ENCODE measurements at regions of chr14 and their contacts with region 1.

Region 1: DNA sequence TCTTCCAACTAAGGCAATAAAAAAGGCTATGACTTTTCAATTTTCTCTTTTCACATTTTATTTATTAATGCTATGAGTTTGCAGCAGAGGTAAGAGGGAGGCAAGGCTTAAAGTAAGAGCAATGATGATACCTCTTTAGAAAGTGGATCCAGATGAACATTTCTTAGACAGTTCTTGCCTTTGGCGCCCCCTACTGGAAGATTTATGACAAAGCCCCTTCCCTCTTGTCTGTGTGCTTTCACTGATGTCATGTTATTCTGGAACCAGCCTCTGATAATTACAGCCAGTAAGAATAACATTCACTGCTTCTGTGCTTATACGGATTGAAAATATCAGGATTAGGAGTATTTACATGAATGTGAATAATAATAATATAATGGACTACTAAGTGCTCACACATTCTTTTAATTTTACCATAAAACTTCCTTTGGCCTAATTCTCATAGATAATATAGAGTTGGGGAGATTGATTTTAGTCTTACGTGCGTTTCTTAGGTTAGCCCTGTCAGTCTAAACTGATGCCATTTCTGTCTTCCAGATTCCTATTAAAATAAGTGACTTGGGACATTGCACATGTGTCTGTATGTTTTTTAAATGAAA is 1929.9 kb upstream of the SEL1L start:
- DNase-seq: peak; percentile 46
- H3K4me3 ChIP-seq: no peak overlapping the region
- H3K27ac ChIP-seq: no peak overlapping the region
- H3K4me1 ChIP-seq: no peaks in the 10 kb centered on the region
- H3K27me3 ChIP-seq: no peaks in the 10 kb centered on the region
- CTCF ChIP-seq: peak; percentile 60 to 64
- POLR2A ChIP-seq: no peak

Region 2: DNA sequence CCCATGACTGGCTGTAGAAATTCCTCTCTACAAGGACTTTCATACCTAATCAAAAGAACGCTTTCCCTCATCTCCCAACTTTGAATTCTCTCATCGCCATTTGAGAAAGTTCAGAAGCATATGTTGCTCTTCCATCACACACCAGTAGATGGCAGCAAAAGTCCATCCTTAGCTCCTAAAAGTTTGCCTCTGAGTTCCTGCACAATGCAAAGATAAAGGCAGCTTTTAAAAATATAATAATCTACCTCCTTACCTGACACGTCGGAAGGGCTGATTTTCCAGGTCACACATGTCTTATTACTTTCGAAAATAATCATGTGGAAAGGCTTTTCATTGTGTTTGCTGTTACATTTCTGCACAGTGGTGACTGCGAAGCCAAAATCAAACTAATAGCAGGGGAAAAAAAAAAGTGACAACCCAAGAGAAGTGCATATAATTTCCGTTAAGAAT is 1473.3 kb before region 1 on chr14:
- CTCF ChIA-PET with region 1: no interaction called
- POLR2A ChIA-PET with region 1: no interaction called
- dilution Hi-C with region 1: no loop called
- intact Hi-C with region 1: loop called (anchors 5 kb)
- DNase-seq: peak; percentile 46
- H3K4me3 ChIP-seq: no peak overlapping the region
- H3K27ac ChIP-seq: no peak overlapping the region
- H3K4me1 ChIP-seq: no peaks in the 10 kb centered on the region
- H3K27me3 ChIP-seq: no peaks in the 10 kb centered on the region
- CTCF ChIP-seq: peak; percentile 49 to 69
- POLR2A ChIP-seq: no peak

Region 3: GRCh38 chr14:82710267-82710841 is 753.2 kb before region 1 on chr14:
- CTCF ChIA-PET with region 1: no interaction called
- POLR2A ChIA-PET with region 1: no interaction called
- dilution Hi-C with region 1: no loop called
- intact Hi-C with region 1: loop called (anchors 5 kb)
- DNase-seq: peak; percentile 45
- H3K4me3 ChIP-seq: no peak overlapping the region
- H3K27ac ChIP-seq: no peak overlapping the region
- H3K4me1 ChIP-seq: no peaks in the 10 kb centered on the region
- H3K27me3 ChIP-seq: no peaks in the 10 kb centered on the region
- CTCF ChIP-seq: peak; percentile 66 to 72
- POLR2A ChIP-seq: no peak

Region 4: DNA sequence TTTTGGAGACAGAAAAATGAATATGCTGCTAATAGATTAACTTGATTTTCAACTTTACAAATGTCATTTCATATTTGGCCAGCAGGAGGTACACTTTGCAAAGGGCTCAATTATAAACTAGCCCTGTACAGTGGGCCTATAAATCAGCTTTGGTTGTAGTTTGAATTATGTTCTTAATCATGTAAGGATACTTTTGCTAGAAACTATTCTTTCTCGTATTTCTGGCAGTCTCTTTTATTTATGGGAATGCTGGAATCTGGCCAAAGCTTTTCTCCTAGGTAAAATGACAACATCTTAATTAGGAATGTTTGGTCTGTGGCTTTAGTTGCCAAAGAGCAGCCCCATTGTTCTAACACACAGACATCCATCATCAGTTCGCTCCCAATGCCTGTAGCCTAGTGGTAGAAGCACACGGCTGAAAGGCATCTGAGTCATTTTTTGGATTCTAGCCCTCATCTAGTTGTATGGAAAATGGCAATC is 607.6 kb before region 1 on chr14:
- CTCF ChIA-PET with region 1: no interaction called
- POLR2A ChIA-PET with region 1: no interaction called
- dilution Hi-C with region 1: no loop called
- intact Hi-C with region 1: loop called (anchors 5 kb)
- DNase-seq: peak; percentile 15
- H3K4me3 ChIP-seq: no peak overlapping the region
- H3K27ac ChIP-seq: no peak overlapping the region
- H3K4me1 ChIP-seq: no peaks in the 10 kb centered on the region
- H3K27me3 ChIP-seq: no peaks in the 10 kb centered on the region
- CTCF ChIP-seq: no peak
- POLR2A ChIP-seq: no peak

Region 5: GRCh38 chr14:83300476-83301064 is 163.0 kb before region 1 on chr14:
- CTCF ChIA-PET with region 1: interaction called, 10 read pairs
- POLR2A ChIA-PET with region 1: no interaction called
- dilution Hi-C with region 1: no loop called
- intact Hi-C with region 1: loop called (anchors 1 kb)
- DNase-seq: peak; percentile 49
- H3K4me3 ChIP-seq: no peak overlapping the region
- H3K27ac ChIP-seq: no peak overlapping the region
- H3K4me1 ChIP-seq: no peaks in the 10 kb centered on the region
- H3K27me3 ChIP-seq: no peaks in the 10 kb centered on the region
- CTCF ChIP-seq: peak; percentile 62 to 68
- POLR2A ChIP-seq: no peak

Region 6: DNA sequence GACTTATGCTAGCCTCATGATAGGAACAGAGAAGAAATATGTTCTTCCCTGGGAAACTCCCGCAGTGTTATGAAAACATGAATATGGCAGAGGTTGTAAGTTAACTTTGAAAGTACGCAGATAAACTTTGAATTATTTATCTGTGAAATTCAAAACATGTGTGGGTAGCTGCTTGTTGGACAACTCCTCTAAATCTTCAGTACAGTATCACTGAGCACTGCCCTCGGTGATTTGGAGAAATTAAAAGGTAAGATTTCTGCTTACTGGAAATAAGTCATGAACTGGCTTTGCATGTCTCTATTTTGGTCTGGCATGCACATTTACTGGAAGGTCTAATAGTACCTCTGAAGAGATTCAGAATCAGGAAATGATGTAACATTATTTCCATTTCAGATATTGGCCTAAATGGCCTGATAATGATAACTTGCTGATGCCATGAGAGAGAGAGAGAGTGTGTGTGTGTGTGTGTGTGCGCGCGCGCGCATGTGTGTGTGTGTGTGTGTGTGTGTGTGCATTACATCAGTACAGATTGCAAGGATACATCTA is 624.5 kb after region 1 on chr14:
- CTCF ChIA-PET with region 1: no interaction called
- POLR2A ChIA-PET with region 1: no interaction called
- dilution Hi-C with region 1: no loop called
- intact Hi-C with region 1: no loop called
- DNase-seq: peak; percentile 52
- H3K4me3 ChIP-seq: no peak overlapping the region
- H3K27ac ChIP-seq: no peak overlapping the region
- H3K4me1 ChIP-seq: no peaks in the 10 kb centered on the region
- H3K27me3 ChIP-seq: no peaks in the 10 kb centered on the region
- CTCF ChIP-seq: no peak
- POLR2A ChIP-seq: no peak

Measured in endothelial cell of umbilical vein (primary cell).